ENCODE measurements at regions of chr11 and their contacts with region 1.

Region 1: GRCh38 chr11:107916671-107917241 is 11.5 kb upstream of the RAB39A start:
- DNase-seq: peak; percentile 81
- ATAC-seq: peak; percentile 94
- H3K4me3 Mint-ChIP-seq: no peak overlapping the region
- H3K27ac Mint-ChIP-seq: no peak overlapping the region
- H3K4me1 Mint-ChIP-seq: 0 out of 2 replicates have a peak, but pooled peaks cover 2% of the 10 kb centered on the region
- H3K27me3 Mint-ChIP-seq: no peaks in the 10 kb centered on the region; the same call in 1 of the 2 replicates
- CTCF ChIP-seq: peak; percentile 92

Region 2: GRCh38 chr11:107840129-107840484 is 76.6 kb before region 1 on chr11:
- CTCF ChIA-PET with region 1: no interaction called
- POLR2A ChIA-PET with region 1: no interaction called
- DNase-seq: no peak
- ATAC-seq: no peak
- H3K4me3 Mint-ChIP-seq: no peak overlapping the region
- H3K27ac Mint-ChIP-seq: no peak overlapping the region
- H3K4me1 Mint-ChIP-seq: peaks cover 19% of the 10 kb centered on the region; the same call in 1 of the 2 replicates
- H3K27me3 Mint-ChIP-seq: peaks cover 15% of the 10 kb centered on the region; the same call in 1 of the 2 replicates
- CTCF ChIP-seq: no peak

Region 3: DNA sequence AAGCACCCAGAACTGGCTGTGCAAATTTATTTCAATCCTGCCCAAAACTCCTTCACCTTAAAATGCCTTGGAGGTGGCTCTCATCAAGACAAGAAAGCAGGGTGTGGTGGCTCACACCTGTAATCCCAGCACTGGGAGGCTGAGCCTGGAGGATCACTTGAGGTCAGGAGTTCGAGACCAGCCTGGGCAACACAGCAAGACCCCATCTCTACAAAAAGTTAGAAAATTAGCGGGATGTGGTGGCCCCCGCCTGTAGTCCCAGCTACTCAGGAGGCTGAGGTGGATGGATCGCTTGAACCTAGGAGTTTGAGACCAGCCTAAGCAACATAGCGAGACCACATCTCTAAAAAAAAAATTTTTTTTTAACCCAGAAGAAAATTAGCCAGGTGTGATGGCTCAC is 10.8 kb after region 1 on chr11:
- CTCF ChIA-PET with region 1: interaction called, 10 read pairs
- POLR2A ChIA-PET with region 1: no interaction called
- DNase-seq: no peak
- ATAC-seq: no peak
- H3K4me3 Mint-ChIP-seq: peak overlapping the region; percentile 67
- H3K27ac Mint-ChIP-seq: no peak overlapping the region
- H3K4me1 Mint-ChIP-seq: peaks cover 13% of the 10 kb centered on the region
- H3K27me3 Mint-ChIP-seq: peaks cover 9% of the 10 kb centered on the region; the same call in 1 of the 2 replicates
- CTCF ChIP-seq: no peak

Measured in WTC11 (cell line).